ENCODE measurements at regions of chr9 and their contacts with region 1.

Region 1: DNA sequence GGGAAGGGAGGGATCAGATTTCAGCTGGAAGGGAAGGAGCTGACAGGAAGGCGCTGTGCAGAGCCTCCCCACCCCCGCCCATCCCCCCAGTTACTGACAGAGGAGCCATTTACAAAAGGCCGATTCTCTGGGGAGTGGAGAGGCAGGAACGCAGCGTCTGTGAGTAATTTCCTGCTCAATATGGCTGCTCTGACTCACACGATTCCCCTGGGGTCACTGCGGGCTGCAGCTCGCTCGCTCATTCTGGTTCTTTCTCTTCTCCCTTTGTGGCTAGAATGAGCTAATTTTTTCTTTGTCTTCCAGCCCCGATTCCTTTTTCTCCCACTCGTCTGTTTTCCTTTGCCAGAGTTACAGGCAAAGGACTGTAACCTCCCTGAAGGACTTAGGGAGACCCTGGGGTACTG is 28.8 kb downstream of the PTPA start:
- DNase-seq: peak; percentile 90
- ATAC-seq: peak; percentile 78

Region 2: DNA sequence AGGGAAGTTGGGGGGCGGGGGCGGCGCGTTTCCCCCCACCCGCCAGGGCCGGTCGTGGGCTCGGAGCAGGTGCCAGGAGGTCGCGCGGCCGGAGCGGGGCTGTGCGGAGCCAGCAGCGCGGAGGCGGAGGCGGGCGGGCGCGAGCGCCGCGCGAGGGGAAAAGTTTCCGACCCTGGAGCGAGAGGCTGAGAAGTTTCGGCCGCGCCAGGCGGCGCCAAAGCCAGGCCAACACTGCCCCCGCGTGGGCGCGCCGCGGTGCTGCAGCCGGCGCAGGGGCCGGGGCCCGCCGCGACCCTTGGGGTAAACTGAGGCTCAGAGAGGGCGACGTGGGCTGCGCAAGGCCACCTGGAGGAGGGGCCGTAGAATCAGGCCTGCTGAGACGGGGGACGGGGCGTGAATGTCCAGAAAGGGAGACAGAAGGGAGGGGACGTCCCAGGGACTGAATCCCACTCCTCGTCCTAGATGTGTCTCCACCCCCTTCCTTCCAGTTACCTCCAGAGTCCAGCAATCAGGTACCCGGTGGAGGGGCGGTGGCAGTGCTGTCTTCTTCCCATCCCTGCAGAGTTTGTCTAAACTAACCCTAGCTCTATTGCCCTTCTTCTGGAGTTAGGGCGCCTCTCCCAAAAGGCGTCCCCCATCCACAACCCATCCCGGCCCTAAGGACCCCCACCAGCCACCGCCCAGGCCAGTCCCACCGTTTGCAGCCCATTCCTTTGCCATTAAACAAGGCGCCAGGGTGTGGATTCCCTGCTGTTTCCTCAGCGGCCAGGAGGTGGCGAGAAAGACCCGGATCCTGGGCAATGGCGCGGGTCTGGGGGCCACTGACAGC is 470.7 kb after region 1 on chr9:
- intact Hi-C with region 1: loop called (anchors 2 kb)
- DNase-seq: peak; percentile 90
- ATAC-seq: peak; percentile 63